Transverse colon (tissue), 4 donors: ENCODE measurements at regions of chr4 and their contacts with region 1.

Region 1: DNA sequence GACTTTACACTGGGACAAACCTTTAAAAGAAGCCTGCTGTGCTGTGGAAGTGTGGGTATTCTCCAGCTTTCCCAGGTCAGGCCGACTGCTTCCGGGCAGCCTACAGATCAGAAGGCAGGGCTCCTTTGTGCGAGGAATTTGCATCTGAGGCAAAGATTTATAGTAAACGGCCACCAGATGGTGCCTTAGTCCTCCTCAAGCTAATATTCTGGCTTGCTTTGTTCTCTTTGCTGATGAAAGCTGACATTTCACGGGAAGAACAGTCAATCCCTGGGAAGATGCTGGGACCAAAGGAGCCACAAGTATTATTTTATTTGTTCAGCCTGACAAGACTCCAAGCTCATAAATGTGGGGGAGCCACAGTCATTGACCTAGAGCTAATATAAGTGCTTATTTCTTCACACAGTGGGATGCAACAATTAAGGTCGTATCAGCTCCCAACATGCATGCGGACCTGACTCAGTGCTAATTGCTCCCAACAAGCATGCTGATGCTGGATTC is 120.7 kb upstream of the TRIM2 start:
- DNase-seq: peak; percentile 69
- H3K4me3 ChIP-seq: no peak overlapping the region
- H3K27ac ChIP-seq: no peak overlapping the region
- H3K4me1 ChIP-seq: peaks cover 0 to 11% (median 0%) of the 10 kb centered on the region in 4 donors
- H3K27me3 ChIP-seq: no peaks in the 10 kb centered on the region
- CTCF ChIP-seq: peak; percentile 53 to 66 (median 62)
- EP300 ChIP-seq: no peak
- POLR2A ChIP-seq: no peak

Region 2: DNA sequence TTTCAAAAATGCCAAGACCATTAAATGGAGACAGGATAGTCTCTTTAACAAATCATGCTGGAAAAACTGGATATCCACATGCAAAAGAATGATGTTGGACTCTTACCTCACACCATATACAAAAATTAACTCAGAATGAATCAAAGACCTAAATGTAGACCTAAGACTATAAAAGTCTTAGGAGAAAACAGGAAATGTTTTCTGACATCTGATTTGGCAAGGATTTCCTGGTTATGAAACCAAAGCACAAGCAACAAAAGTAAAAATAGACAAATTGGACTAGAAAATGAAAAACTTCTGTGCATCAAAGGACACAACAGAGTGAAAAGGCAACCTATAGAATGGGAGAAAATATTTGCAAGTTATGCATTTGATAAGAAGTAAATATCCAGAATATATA is 266.2 kb before region 1 on chr4:
- in situ Hi-C with region 1: no loop called
- intact Hi-C with region 1: no loop called
- DNase-seq: no peak
- H3K4me3 ChIP-seq: no peak overlapping the region
- H3K27ac ChIP-seq: no peak overlapping the region
- H3K4me1 ChIP-seq: peaks cover 0 to 6% (median 0%) of the 10 kb centered on the region in 4 donors
- H3K27me3 ChIP-seq: no peaks in the 10 kb centered on the region
- CTCF ChIP-seq: no peak
- EP300 ChIP-seq: no peak
- POLR2A ChIP-seq: no peak

Region 3: GRCh38 chr4:152843481-152844090 is 239.9 kb before region 1 on chr4:
- in situ Hi-C with region 1: loop called in 2 of 4 experiments (anchors 5 kb)
- intact Hi-C with region 1: loop called (anchors 5 kb)
- DNase-seq: peak; percentile 59
- H3K4me3 ChIP-seq: no peak overlapping the region
- H3K27ac ChIP-seq: peak overlapping the region in 3 of 4 donors; percentile 23 to 59 (median 51)
- H3K4me1 ChIP-seq: peaks cover 0 to 19% (median 9%) of the 10 kb centered on the region in 4 donors
- H3K27me3 ChIP-seq: no peaks in the 10 kb centered on the region
- CTCF ChIP-seq: no peak
- EP300 ChIP-seq: no peak
- POLR2A ChIP-seq: no peak

Region 4: GRCh38 chr4:152850377-152850776 is 233.1 kb before region 1 on chr4:
- in situ Hi-C with region 1: loop called (anchors 5 to 25 kb)
- intact Hi-C with region 1: no loop called
- DNase-seq: no peak
- H3K4me3 ChIP-seq: no peak overlapping the region
- H3K27ac ChIP-seq: no peak overlapping the region
- H3K4me1 ChIP-seq: peaks cover 0 to 14% (median 0%) of the 10 kb centered on the region in 4 donors
- H3K27me3 ChIP-seq: no peaks in the 10 kb centered on the region
- CTCF ChIP-seq: no peak
- EP300 ChIP-seq: no peak
- POLR2A ChIP-seq: no peak